ENCODE measurements at regions of chr1 and their contacts with region 1.

Region 1: GRCh38 chr1:224182866-224183590 is at the start of gene DEGS1:
- DNase-seq: peak; percentile 81
- H3K4me3 Mint-ChIP-seq: peak within 1 kb of the TSS; percentile 93
- H3K27ac Mint-ChIP-seq: peak within 1 kb of the TSS; percentile 85
- H3K4me1 Mint-ChIP-seq: peaks cover 39% of the 10 kb centered on the region
- H3K27me3 Mint-ChIP-seq: peaks cover 6% of the 10 kb centered on the region
- total RNA-seq, gene DEGS1: 49.7 and 51.1 TPM in 2 replicates

Region 2: GRCh38 chr1:224113918-224114786 is 68.9 kb before region 1 on chr1 and contains the start of gene FBXO28:
- intact Hi-C with region 1: loop called (anchors 1 kb)
- DNase-seq: peak; percentile 90
- H3K4me3 Mint-ChIP-seq: peak within 1 kb of the TSS; percentile 80
- H3K27ac Mint-ChIP-seq: peak within 1 kb of the TSS; percentile 79
- H3K4me1 Mint-ChIP-seq: peaks cover 25% of the 10 kb centered on the region
- H3K27me3 Mint-ChIP-seq: peaks cover 17% of the 10 kb centered on the region
- total RNA-seq, gene FBXO28: 22.9 and 24.3 TPM in 2 replicates

Region 3: GRCh38 chr1:224203243-224204016 is 20.4 kb after region 1 on chr1:
- intact Hi-C with region 1: loop called (anchors 2 kb)
- DNase-seq: no peak
- H3K4me3 Mint-ChIP-seq: no peak overlapping the region
- H3K27ac Mint-ChIP-seq: no peak overlapping the region
- H3K4me1 Mint-ChIP-seq: peaks cover 13% of the 10 kb centered on the region
- H3K27me3 Mint-ChIP-seq: no peaks in the 10 kb centered on the region

Region 4: DNA sequence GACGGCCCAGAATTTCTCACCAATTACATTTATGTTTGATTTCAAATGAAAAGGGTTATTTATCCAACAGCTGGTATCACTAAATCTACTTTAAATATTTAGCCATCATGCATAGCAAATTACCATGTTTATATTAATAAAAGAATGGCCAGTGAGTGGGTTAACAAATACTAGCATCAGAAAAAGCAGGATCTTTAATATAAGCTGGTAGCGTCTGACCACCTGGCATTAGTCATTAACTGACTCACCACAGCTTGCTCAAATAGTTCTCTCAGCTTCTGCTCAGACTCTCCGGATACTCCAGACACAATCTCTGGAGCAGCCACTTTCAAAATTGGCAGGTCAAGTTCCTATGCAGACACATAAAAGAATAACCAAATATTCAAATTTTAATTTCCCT is 117.3 kb after region 1 on chr1:
- intact Hi-C with region 1: no loop called
- DNase-seq: no peak
- H3K4me3 Mint-ChIP-seq: no peak overlapping the region
- H3K27ac Mint-ChIP-seq: no peak overlapping the region
- H3K4me1 Mint-ChIP-seq: peaks cover 3% of the 10 kb centered on the region
- H3K27me3 Mint-ChIP-seq: no peaks in the 10 kb centered on the region

Region 5: GRCh38 chr1:224434691-224435317 is 251.8 kb after region 1 on chr1 and contains the start of gene WDR26:
- intact Hi-C with region 1: loop called (anchors 5 kb)
- DNase-seq: peak; percentile 83
- H3K4me3 Mint-ChIP-seq: peak within 1 kb of the TSS; percentile 90
- H3K27ac Mint-ChIP-seq: peak within 1 kb of the TSS; percentile 92
- H3K4me1 Mint-ChIP-seq: peaks cover 44% of the 10 kb centered on the region
- H3K27me3 Mint-ChIP-seq: no peaks in the 10 kb centered on the region
- total RNA-seq, gene WDR26: 80.5 and 82.0 TPM in 2 replicates

Region 6: DNA sequence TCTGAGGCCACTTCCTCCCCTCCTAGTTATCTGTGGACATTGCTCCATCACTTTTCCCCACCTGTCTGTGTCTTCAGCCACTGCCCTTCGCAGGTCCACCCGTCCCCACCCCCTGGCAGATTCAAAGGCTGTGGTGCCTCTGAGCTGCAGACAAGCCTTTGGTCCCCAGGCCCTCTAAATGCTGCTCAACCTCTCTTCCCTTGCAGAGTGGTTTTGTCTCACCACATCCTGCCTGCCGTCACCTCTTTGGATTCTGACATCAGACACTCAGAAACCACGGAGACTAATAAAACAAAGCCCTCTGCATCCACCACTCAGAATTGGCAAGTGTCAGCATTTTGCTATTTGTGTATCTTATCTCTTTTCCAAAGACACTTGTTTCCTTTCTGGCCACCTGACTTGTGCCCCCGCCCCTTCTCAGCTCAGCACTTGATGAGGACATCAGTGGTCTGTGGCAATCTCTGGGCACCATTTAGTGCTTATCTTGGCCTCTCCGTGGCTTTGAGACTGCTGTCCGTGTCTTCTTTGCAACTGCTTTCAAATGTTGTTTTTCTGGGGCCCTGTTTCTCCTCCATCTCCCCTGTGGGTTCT is 440.8 kb after region 1 on chr1:
- intact Hi-C with region 1: loop called (anchors 10 kb)
- DNase-seq: peak; percentile 86
- H3K4me3 Mint-ChIP-seq: peak overlapping the region; percentile 65
- H3K27ac Mint-ChIP-seq: peak overlapping the region; percentile 91
- H3K4me1 Mint-ChIP-seq: peaks cover 39% of the 10 kb centered on the region
- H3K27me3 Mint-ChIP-seq: peaks cover 28% of the 10 kb centered on the region